Heart right ventricle (tissue), 16 donors: ENCODE measurements at regions of chr18 and their contacts with region 1.

Region 1: GRCh38 chr18:63444567-63444966 is 22.3 kb upstream of the VPS4B start:
- DNase-seq: no peak
- ATAC-seq: peak in 6 of 8 donors; percentile 37 to 89 (median 64)
- H3K4me3 ChIP-seq: no peak overlapping the region
- H3K27ac ChIP-seq: peak overlapping the region in 1 of 10 donors; percentile 71
- H3K4me1 ChIP-seq: peaks cover 0 to 27% (median 0%) of the 10 kb centered on the region in 9 donors
- H3K27me3 ChIP-seq: no peaks in the 10 kb centered on the region
- CTCF ChIP-seq: no peak

Region 2: DNA sequence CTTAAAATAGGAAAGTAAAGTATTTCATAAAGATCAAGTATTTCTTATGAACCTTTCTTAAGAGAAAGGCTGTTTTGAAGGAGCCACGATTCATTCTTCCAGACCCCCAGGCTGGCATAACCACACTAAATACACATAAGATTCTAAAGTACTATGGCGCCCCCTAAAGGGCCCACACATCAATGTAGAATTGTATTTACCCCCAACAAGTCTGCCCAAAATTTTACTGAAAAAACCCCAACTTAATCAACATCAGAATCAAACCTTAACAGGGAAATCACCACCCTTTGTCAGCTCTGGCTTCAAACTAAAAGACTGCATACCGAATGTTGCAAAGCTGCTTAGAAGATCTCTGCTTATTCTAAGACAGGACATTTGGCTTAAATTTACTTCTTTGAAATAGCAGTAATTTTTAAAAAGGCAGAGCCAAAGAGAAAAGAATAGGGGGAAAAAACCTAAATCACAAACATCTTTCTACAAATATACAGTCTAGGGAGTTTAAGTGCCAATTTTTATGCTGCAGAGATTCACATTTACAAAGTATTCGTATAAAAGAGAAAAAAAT is 104.6 kb before region 1 on chr18:
- intact Hi-C with region 1: loop called in 9 of 10 experiments (anchors 1 to 5 kb)
- DNase-seq: no peak
- ATAC-seq: no peak
- H3K4me3 ChIP-seq: no peak overlapping the region
- H3K27ac ChIP-seq: no peak overlapping the region
- H3K4me1 ChIP-seq: peaks cover 0 to 8% (median 4%) of the 10 kb centered on the region in 9 donors
- H3K27me3 ChIP-seq: no peaks in the 10 kb centered on the region
- CTCF ChIP-seq: peak; percentile 10 to 65 (median 56)

Region 3: GRCh38 chr18:64519201-64519600 is 1074.6 kb after region 1 on chr18:
- intact Hi-C with region 1: no loop called
- DNase-seq: no peak
- ATAC-seq: no peak
- H3K4me3 ChIP-seq: no peak overlapping the region
- H3K27ac ChIP-seq: no peak overlapping the region
- H3K4me1 ChIP-seq: no peaks in the 10 kb centered on the region
- H3K27me3 ChIP-seq: no peaks in the 10 kb centered on the region
- CTCF ChIP-seq: no peak